Ovary (tissue), 10 donors: ENCODE measurements at regions of chr3 and their contacts with region 1.

Region 1: DNA sequence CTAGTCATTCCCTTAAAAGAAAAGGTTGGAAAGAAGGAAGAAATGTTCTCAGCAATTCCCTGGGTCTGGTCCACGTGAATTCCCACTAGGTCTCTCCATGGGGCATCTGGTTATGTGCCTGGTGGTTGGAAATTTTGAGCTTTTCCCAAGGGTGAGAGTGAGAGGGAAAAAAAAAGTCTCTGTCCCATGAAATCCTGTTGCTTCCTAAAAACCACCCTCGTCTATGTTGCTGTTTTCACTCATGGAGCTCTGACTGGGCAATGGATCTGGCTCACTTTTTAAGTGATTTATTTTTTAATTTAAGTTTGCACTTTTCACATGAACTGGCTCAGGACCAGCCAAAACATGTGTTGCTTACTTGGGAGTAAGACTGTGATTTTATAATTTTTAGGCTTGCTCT is 190.1 kb downstream of the CHST2 start:
- DNase-seq: peak in 2 of 5 donors; percentile 19 to 34
- H3K4me3 ChIP-seq: no peak overlapping the region
- H3K27ac ChIP-seq: no peak overlapping the region
- H3K4me1 ChIP-seq: peaks cover 12% of the 10 kb centered on the region
- H3K27me3 ChIP-seq: no peaks in the 10 kb centered on the region
- CTCF ChIP-seq: no peak
- EP300 ChIP-seq: no peak
- POLR2A ChIP-seq: no peak

Region 2: DNA sequence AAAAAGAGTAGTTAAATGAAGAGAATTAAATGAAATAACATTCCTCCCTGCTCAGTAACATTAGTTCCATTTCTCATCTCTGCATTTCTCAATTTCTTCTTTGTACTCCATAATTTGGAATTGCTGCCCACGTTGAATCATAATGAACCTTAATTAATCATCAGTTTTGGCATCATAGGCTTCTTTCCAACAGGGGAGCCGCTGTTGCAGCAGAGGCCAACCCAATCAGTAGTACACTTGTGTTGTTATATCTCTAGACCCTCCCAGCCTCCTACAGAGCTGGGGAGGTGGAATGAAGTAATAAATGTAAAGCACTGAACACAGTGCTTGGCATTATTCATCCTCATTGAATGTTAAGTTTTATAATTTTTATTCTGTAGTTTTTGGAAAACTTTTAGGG is 50.5 kb after region 1 on chr3:
- intact Hi-C with region 1: loop called in 1 of 4 experiments (anchors 2 kb)
- DNase-seq: no peak
- H3K4me3 ChIP-seq: no peak overlapping the region
- H3K27ac ChIP-seq: no peak overlapping the region
- H3K4me1 ChIP-seq: no peaks in the 10 kb centered on the region
- H3K27me3 ChIP-seq: no peaks in the 10 kb centered on the region
- CTCF ChIP-seq: no peak
- EP300 ChIP-seq: no peak
- POLR2A ChIP-seq: no peak